H1 (cell line): ENCODE measurements at regions of chr22 and their contacts with region 1.

Region 1: GRCh38 chr22:33044112-33044511 is 14.1 kb downstream of the SYN3 start:
- DNase-seq: no peak
- H3K4me3 ChIP-seq: no peak overlapping the region
- H3K27ac ChIP-seq: no peak overlapping the region
- H3K4me1 ChIP-seq: peaks cover 0 to 10% (median 2%) of the 10 kb centered on the region in 4 experiments; a peak in 3 of 7 replicates
- H3K27me3 ChIP-seq: peaks cover 0 to 2% (median 0%) of the 10 kb centered on the region in 4 experiments; a peak in 2 of 7 replicates
- CTCF ChIP-seq: no peak
- EP300 ChIP-seq: no peak
- POLR2A ChIP-seq: no peak
- RAD21 ChIP-seq: no peak

Region 2: GRCh38 chr22:32674925-32675825 is 368.9 kb before region 1 on chr22:
- CTCF ChIA-PET with region 1: no interaction called
- POLR2A ChIA-PET with region 1: no interaction called
- DNase-seq: no peak
- H3K4me3 ChIP-seq: no peak overlapping the region
- H3K27ac ChIP-seq: no peak overlapping the region
- H3K4me1 ChIP-seq: no peaks in the 10 kb centered on the region
- H3K27me3 ChIP-seq: no peaks in the 10 kb centered on the region; a peak in 1 of 7 replicates
- CTCF ChIP-seq: no peak
- EP300 ChIP-seq: no peak
- POLR2A ChIP-seq: no peak
- RAD21 ChIP-seq: no peak

Region 3: GRCh38 chr22:32843300-32843699 is 200.8 kb before region 1 on chr22:
- CTCF ChIA-PET with region 1: no interaction called
- POLR2A ChIA-PET with region 1: no interaction called
- DNase-seq: no peak
- H3K4me3 ChIP-seq: no peak overlapping the region
- H3K27ac ChIP-seq: no peak overlapping the region
- H3K4me1 ChIP-seq: no peaks in the 10 kb centered on the region; a peak in 1 of 7 replicates
- H3K27me3 ChIP-seq: no peaks in the 10 kb centered on the region
- CTCF ChIP-seq: no peak
- EP300 ChIP-seq: no peak
- POLR2A ChIP-seq: no peak
- RAD21 ChIP-seq: no peak

Region 4: DNA sequence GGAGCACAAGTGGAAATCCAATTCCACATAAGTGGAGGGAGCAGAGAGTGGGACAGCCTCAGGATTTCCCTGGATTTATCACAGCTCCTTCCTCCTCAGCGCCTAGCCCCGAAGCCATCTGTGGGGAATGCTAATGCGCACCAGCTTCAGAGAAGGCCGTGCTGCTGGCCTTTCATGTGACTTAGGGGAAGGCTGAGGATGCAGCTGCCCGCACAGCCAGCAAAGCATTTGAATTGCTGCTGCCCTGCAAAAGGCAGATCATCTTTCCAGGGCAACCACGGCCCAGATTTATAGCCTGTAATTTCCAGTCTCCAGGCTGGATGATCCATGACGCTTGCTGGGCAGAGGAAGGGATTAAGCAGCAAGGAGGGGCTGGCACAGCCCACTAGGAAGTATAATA is 15.9 kb before region 1 on chr22:
- CTCF ChIA-PET with region 1: interaction called, 131 read pairs
- POLR2A ChIA-PET with region 1: interaction called, 30 read pairs
- DNase-seq: peak in 1 of 2 experiments; percentile 39
- H3K4me3 ChIP-seq: no peak overlapping the region
- H3K27ac ChIP-seq: no peak overlapping the region
- H3K4me1 ChIP-seq: peaks cover 0 to 7% (median 0%) of the 10 kb centered on the region in 4 experiments; a peak in 2 of 7 replicates
- H3K27me3 ChIP-seq: no peaks in the 10 kb centered on the region
- CTCF ChIP-seq: no peak
- EP300 ChIP-seq: no peak
- POLR2A ChIP-seq: no peak
- RAD21 ChIP-seq: no peak